ENCODE measurements at regions of chrX and their contacts with region 1.

Region 1: GRCh38 chrX:118770133-118770760 is 42.8 kb downstream of the IL13RA1 start:
- DNase-seq: no peak
- H3K4me3 ChIP-seq: no peak overlapping the region
- H3K4me3 Mint-ChIP-seq: no peak overlapping the region
- H3K27ac ChIP-seq: no peak overlapping the region
- H3K27ac Mint-ChIP-seq: no peak overlapping the region
- H3K4me1 ChIP-seq: no peaks in the 10 kb centered on the region
- H3K4me1 Mint-ChIP-seq: no peaks in the 10 kb centered on the region
- H3K27me3 ChIP-seq: no peaks in the 10 kb centered on the region
- H3K27me3 Mint-ChIP-seq: peaks cover 0 to 3% (median 0%) of the 10 kb centered on the region in 3 donors
- CTCF ChIP-seq: no peak

Region 2: GRCh38 chrX:118666548-118666947 is 103.7 kb before region 1 on chrX:
- intact Hi-C with region 1: loop called in 1 of 2 experiments (anchors 10 kb)
- DNase-seq: no peak
- H3K4me3 ChIP-seq: no peak overlapping the region
- H3K4me3 Mint-ChIP-seq: no peak overlapping the region
- H3K27ac ChIP-seq: no peak overlapping the region
- H3K27ac Mint-ChIP-seq: peak overlapping the region in 1 of 7 donors; percentile 2
- H3K4me1 ChIP-seq: no peaks in the 10 kb centered on the region
- H3K4me1 Mint-ChIP-seq: no peaks in the 10 kb centered on the region
- H3K27me3 ChIP-seq: no peaks in the 10 kb centered on the region
- H3K27me3 Mint-ChIP-seq: peaks cover 0 to 4% (median 1%) of the 10 kb centered on the region in 3 donors
- CTCF ChIP-seq: no peak